B cell (primary cell): ENCODE measurements at regions of chr4 and their contacts with region 1.

Region 1: DNA sequence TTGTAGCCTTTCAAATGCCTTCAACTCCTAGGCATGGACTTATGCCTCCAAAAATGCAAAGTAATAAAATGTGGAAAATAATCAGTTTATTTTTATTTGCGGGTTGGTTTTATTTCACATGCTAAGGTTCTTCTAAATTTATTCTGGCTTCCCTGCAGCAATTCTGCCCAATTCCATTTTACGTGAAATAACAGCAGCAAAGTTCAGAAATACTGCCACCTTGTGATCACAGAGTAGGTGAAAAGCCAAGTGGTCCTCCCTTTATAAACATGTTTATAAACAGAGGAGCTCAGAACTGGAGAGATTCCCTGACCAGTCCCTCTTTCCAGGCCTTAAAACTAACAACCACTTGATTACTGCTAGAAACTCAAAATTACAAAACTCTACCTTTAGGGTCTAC is 14.7 kb upstream of the DCHS2 start:
- DNase-seq: peak; percentile 58
- ATAC-seq: no peak
- H3K4me3 ChIP-seq: no peak overlapping the region
- H3K4me3 Mint-ChIP-seq: no peak overlapping the region
- H3K27ac ChIP-seq: no peak overlapping the region
- H3K27ac Mint-ChIP-seq: no peak overlapping the region
- H3K4me1 ChIP-seq: no peaks in the 10 kb centered on the region
- H3K4me1 Mint-ChIP-seq: no peaks in the 10 kb centered on the region
- H3K27me3 ChIP-seq: peaks cover 0 to 10% (median 2%) of the 10 kb centered on the region in 4 experiments
- H3K27me3 Mint-ChIP-seq: peaks cover 36% of the 10 kb centered on the region
- CTCF ChIP-seq: peak; percentile 70

Region 2: DNA sequence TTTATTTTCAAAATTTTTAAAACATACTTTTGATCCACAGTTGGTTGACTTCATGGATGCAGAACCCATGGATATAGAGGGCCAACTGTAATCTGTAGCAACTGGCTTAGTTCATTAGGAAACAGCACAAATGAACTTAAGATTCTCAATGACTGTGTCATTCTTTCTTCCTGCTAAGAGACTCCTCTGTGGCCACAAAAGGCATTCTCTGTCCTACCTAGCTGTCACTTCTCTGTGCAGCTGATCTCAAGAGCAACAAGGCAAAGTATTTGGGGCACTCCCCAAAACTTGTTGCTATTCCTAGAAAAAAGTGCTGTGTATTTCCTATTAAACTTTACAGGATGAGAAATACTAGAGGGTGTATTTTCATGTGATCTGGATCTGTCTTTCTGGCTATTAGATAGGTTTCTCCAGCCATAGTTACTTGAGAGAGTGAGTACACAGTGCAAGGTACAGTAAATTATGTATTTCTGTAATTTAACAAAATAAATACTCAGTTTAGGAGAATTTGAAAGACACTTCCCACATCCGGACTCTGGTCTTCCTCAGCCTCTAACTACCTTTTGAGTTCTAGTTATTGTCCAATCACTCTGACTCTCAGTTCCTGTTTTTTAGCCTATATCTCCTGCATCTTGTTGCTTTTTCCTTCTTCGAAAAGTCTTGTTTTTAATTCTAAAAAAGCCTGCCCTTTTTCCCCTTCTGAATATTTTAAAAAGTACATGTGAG is 800.3 kb before region 1 on chr4:
- CTCF ChIA-PET with region 1: no interaction called
- POLR2A ChIA-PET with region 1: no interaction called
- intact Hi-C with region 1: no loop called
- DNase-seq: peak; percentile 23
- ATAC-seq: no peak
- H3K4me3 ChIP-seq: no peak overlapping the region
- H3K4me3 Mint-ChIP-seq: no peak overlapping the region
- H3K27ac ChIP-seq: no peak overlapping the region
- H3K27ac Mint-ChIP-seq: no peak overlapping the region
- H3K4me1 ChIP-seq: peaks cover 8 to 14% of the 10 kb centered on the region in 2 donors
- H3K4me1 Mint-ChIP-seq: peaks cover 12% of the 10 kb centered on the region
- H3K27me3 ChIP-seq: no peaks in the 10 kb centered on the region
- H3K27me3 Mint-ChIP-seq: no peaks in the 10 kb centered on the region
- CTCF ChIP-seq: no peak

Region 3: DNA sequence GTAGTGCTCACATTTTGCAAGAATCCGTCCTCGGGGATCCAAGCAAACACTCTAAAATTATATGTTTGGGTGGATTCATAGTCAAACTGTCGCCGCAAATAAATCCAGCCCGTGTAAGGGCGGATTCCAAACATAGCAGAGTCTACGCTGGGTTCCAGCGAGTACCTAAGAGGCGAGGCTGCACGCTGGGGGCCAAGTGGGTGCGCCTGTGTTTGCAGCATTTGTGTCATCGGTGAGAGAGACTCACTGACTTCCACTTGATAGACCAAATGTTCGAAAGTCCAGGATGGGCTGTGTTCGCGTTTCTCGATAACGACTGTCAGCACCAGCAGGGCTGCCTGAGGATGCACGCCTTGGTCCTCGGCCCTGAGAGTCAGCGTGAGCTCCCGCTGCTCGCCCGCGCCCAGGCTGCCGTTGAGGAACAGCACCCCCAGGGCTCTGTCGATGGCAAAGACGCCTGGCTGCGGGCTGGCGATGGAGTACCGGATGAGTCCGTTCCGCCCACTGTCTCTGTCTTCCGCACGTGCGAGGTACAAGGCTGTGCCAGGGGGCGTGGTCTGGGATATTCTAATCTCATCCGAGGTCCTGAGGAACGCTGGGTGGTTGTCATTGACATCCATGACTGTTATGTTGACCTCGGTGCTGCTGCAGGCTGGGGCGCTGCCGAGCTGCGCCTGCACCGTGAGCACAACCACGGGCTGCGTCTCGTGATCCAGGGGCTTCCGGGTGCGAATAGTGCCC is 173.4 kb before region 1 on chr4:
- CTCF ChIA-PET with region 1: interaction called, 98 read pairs
- POLR2A ChIA-PET with region 1: no interaction called
- intact Hi-C with region 1: loop called (anchors 1 kb)
- DNase-seq: peak; percentile 81
- ATAC-seq: peak; percentile 83
- H3K4me3 ChIP-seq: peak overlapping the region; percentile 19 to 70 (median 51)
- H3K4me3 Mint-ChIP-seq: peak overlapping the region; percentile 90
- H3K27ac ChIP-seq: peak overlapping the region in 1 of 2 donors; percentile 9
- H3K27ac Mint-ChIP-seq: peak overlapping the region; percentile 66
- H3K4me1 ChIP-seq: peaks cover 7 to 13% of the 10 kb centered on the region in 2 donors
- H3K4me1 Mint-ChIP-seq: peaks cover 13% of the 10 kb centered on the region
- H3K27me3 ChIP-seq: peaks cover 0 to 15% (median 3%) of the 10 kb centered on the region in 4 experiments
- H3K27me3 Mint-ChIP-seq: peaks cover 23% of the 10 kb centered on the region
- CTCF ChIP-seq: peak; percentile 33

Region 4: DNA sequence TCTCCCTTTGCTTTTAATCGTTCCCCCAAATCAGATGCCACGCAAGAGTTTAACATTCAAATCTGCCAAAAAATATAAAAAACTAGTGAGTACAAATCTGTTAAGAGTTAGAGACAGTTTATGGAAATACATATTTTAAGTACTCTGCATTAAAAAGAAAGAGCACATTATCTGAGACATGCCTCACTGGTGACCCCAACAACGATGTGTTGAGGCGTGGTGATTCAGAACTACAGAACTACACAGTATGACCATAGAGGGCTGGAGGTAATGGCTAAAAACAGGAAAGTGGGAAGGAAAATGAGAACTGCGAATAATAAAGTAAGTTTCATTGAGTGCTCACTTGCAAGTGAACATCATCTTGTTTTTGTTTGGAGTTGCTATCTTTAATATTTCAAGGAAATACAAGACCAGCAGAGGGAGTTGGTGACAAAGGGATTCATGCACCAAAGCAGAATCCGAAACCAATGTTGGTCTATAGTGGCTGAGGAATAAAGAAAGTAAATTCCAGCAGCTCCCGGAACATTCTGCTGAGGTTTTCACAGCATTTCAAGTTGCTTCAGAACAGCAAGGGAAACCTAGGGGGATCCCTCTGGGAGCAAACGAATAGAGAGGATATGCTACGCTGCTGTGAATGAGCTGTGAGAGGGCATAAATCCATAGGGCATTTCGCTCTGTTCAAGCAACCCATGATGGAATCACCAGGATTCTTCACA is 106.8 kb before region 1 on chr4:
- CTCF ChIA-PET with region 1: interaction called, 5 read pairs
- POLR2A ChIA-PET with region 1: no interaction called
- intact Hi-C with region 1: loop called (anchors 2 kb)
- DNase-seq: peak; percentile 27
- ATAC-seq: no peak
- H3K4me3 ChIP-seq: no peak overlapping the region
- H3K4me3 Mint-ChIP-seq: no peak overlapping the region
- H3K27ac ChIP-seq: no peak overlapping the region
- H3K27ac Mint-ChIP-seq: no peak overlapping the region
- H3K4me1 ChIP-seq: peaks cover 13 to 17% of the 10 kb centered on the region in 2 donors
- H3K4me1 Mint-ChIP-seq: peaks cover 16% of the 10 kb centered on the region
- H3K27me3 ChIP-seq: no peaks in the 10 kb centered on the region
- H3K27me3 Mint-ChIP-seq: peaks cover 14% of the 10 kb centered on the region
- CTCF ChIP-seq: no peak

Region 5: GRCh38 chr4:154519214-154519613 is 13.0 kb after region 1 on chr4:
- CTCF ChIA-PET with region 1: interaction called, 11 read pairs
- POLR2A ChIA-PET with region 1: no interaction called
- intact Hi-C with region 1: no loop called
- DNase-seq: no peak
- ATAC-seq: no peak
- H3K4me3 ChIP-seq: no peak overlapping the region
- H3K4me3 Mint-ChIP-seq: no peak overlapping the region
- H3K27ac ChIP-seq: no peak overlapping the region
- H3K27ac Mint-ChIP-seq: no peak overlapping the region
- H3K4me1 ChIP-seq: no peaks in the 10 kb centered on the region
- H3K4me1 Mint-ChIP-seq: no peaks in the 10 kb centered on the region
- H3K27me3 ChIP-seq: peaks cover 0 to 6% (median 2%) of the 10 kb centered on the region in 4 experiments
- H3K27me3 Mint-ChIP-seq: peaks cover 61% of the 10 kb centered on the region
- CTCF ChIP-seq: no peak